ENCODE measurements at regions of chr9 and their contacts with region 1.

Region 1: GRCh38 chr9:131885144-131885609 is 145.3 kb upstream of the RAPGEF1 start:
- DNase-seq: peak; percentile 84
- H3K4me3 ChIP-seq: no peak overlapping the region
- H3K27ac ChIP-seq: peak overlapping the region in 1 of 2 experiments; percentile 85; a peak in 2 of 4 replicates
- H3K4me1 ChIP-seq: peaks cover 6 to 42% of the 10 kb centered on the region in 2 experiments; a peak in 2 of 4 replicates
- H3K27me3 ChIP-seq: no peaks in the 10 kb centered on the region
- CTCF ChIP-seq: no peak
- EP300 ChIP-seq: peak in 1 of 2 experiments; percentile 98; a peak in 2 of 4 replicates
- RAD21 ChIP-seq: peak; percentile 38; the same call in 1 of the 2 replicates

Region 2: GRCh38 chr9:131872006-131872405 is 13.2 kb before region 1 on chr9:
- CTCF ChIA-PET with region 1: interaction called, 33 read pairs
- POLR2A ChIA-PET with region 1: interaction called, 5 read pairs
- DNase-seq: no peak
- H3K4me3 ChIP-seq: no peak overlapping the region
- H3K27ac ChIP-seq: no peak overlapping the region
- H3K4me1 ChIP-seq: peaks cover 0 to 33% of the 10 kb centered on the region in 2 experiments; a peak in 2 of 4 replicates
- H3K27me3 ChIP-seq: no peaks in the 10 kb centered on the region
- CTCF ChIP-seq: peak; percentile 34
- EP300 ChIP-seq: no peak
- RAD21 ChIP-seq: 0 out of 2 replicates have a peak, but pooled peaks have one; percentile 16